ENCODE measurements at regions of chr1 and their contacts with region 1.

Region 1: GRCh38 chr1:213507472-213508223 is 456.6 kb downstream of the RPS6KC1 start:
- DNase-seq: no peak
- H3K4me3 ChIP-seq: no peak overlapping the region
- H3K27ac ChIP-seq: no peak overlapping the region
- H3K4me1 ChIP-seq: no peaks in the 10 kb centered on the region
- H3K27me3 ChIP-seq: peaks cover 6% of the 10 kb centered on the region
- CTCF ChIP-seq: no peak

Region 2: GRCh38 chr1:215380557-215380956 is 1872.9 kb after region 1 on chr1:
- CTCF ChIA-PET with region 1: no interaction called
- dilution Hi-C with region 1: no loop called
- in situ Hi-C with region 1: no loop called
- intact Hi-C with region 1: loop called (anchors 10 kb)
- DNase-seq: no peak
- H3K4me3 ChIP-seq: no peak overlapping the region
- H3K27ac ChIP-seq: no peak overlapping the region
- H3K4me1 ChIP-seq: no peaks in the 10 kb centered on the region
- H3K27me3 ChIP-seq: no peaks in the 10 kb centered on the region
- CTCF ChIP-seq: no peak